Endothelial cell of umbilical vein (primary cell): ENCODE measurements at regions of chr2 and their contacts with region 1.

Region 1: GRCh38 chr2:99818842-99819241 is 323.5 kb downstream of the AFF3 start:
- DNase-seq: peak; percentile 57
- H3K4me3 ChIP-seq: no peak overlapping the region
- H3K27ac ChIP-seq: no peak overlapping the region
- H3K4me1 ChIP-seq: peaks cover 3% of the 10 kb centered on the region
- H3K27me3 ChIP-seq: peaks cover 8 to 10% of the 10 kb centered on the region in 2 experiments
- CTCF ChIP-seq: peak; percentile 13 to 25
- POLR2A ChIP-seq: no peak

Region 2: DNA sequence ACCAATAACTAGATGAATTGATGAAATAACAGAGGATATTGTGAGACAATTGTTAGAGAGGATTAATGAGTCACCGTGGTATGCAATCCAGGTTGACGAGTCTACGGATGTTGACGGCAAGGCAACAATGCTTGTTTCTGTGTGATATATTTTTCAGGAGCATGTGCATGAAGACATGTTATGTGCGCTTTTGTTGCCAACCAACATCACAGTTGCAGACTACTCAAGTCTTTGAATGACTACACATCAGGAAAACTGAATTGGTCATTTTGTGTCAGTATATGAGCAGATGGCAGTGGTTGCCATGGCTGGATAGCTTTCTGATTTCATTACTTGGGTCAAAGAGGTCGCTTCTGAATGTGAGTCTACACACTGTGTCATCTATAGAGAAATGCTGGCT is 786.1 kb before region 1 on chr2:
- CTCF ChIA-PET with region 1: no interaction called
- POLR2A ChIA-PET with region 1: no interaction called
- dilution Hi-C with region 1: no loop called
- intact Hi-C with region 1: no loop called
- DNase-seq: no peak
- H3K4me3 ChIP-seq: no peak overlapping the region
- H3K27ac ChIP-seq: no peak overlapping the region
- H3K4me1 ChIP-seq: no peaks in the 10 kb centered on the region
- H3K27me3 ChIP-seq: peaks cover 2% of the 10 kb centered on the region in 2 experiments
- CTCF ChIP-seq: no peak
- POLR2A ChIP-seq: no peak

Region 3: DNA sequence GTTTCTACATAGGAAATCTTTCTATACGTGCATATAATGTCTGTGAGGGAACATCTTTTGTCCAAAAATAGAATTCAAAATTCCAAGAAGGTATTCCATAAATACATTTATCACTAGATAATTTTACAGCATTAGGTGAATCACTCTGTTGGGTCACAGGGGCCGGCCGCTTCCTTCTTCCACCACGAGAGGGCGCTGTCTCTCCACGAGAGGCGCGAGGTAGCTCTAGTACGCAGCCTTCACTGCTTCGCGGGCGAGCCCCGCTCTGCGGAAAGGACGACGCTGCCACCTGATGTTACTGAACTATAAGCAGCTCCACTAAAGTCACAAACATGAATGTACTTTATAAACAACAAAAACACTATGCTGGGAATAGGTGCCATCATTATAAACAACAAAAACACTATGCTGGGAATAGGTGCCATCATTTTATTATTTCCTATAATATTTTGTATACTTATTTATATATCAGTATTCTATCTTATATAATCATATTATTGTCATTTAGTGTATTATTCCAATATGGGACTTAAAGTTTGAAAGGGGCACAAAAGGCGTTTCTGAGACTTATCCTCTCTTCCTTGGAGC is 259.7 kb before region 1 on chr2:
- CTCF ChIA-PET with region 1: interaction called, 18 read pairs
- POLR2A ChIA-PET with region 1: no interaction called
- dilution Hi-C with region 1: no loop called
- intact Hi-C with region 1: loop called (anchors 2 kb)
- DNase-seq: peak; percentile 72
- H3K4me3 ChIP-seq: no peak overlapping the region
- H3K27ac ChIP-seq: no peak overlapping the region
- H3K4me1 ChIP-seq: no peaks in the 10 kb centered on the region
- H3K27me3 ChIP-seq: peaks cover 4 to 14% of the 10 kb centered on the region in 2 experiments
- CTCF ChIP-seq: peak; percentile 91 to 96
- POLR2A ChIP-seq: no peak

Region 4: DNA sequence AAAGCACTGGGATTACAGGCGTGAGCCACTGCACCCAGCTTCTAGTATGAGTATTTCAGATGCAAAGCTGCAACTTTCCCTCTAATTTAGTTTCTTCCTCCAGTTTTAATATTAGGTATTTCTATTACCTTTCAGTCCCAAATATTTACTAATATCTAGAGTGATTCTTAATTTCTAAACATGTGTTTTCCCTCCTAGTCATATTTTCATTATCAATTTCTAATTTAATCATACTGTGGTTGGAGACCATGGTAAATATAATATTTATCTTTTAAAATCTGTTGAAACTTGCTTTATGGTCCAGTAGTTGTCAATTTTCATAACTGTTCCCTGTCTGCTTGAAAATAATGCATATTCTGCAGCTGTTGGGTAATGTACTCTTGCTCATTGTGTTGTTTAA is 83.1 kb before region 1 on chr2:
- CTCF ChIA-PET with region 1: no interaction called
- POLR2A ChIA-PET with region 1: no interaction called
- dilution Hi-C with region 1: no loop called
- intact Hi-C with region 1: no loop called
- DNase-seq: no peak
- H3K4me3 ChIP-seq: no peak overlapping the region
- H3K27ac ChIP-seq: no peak overlapping the region
- H3K4me1 ChIP-seq: no peaks in the 10 kb centered on the region
- H3K27me3 ChIP-seq: no peaks in the 10 kb centered on the region
- CTCF ChIP-seq: no peak
- POLR2A ChIP-seq: no peak

Region 5: DNA sequence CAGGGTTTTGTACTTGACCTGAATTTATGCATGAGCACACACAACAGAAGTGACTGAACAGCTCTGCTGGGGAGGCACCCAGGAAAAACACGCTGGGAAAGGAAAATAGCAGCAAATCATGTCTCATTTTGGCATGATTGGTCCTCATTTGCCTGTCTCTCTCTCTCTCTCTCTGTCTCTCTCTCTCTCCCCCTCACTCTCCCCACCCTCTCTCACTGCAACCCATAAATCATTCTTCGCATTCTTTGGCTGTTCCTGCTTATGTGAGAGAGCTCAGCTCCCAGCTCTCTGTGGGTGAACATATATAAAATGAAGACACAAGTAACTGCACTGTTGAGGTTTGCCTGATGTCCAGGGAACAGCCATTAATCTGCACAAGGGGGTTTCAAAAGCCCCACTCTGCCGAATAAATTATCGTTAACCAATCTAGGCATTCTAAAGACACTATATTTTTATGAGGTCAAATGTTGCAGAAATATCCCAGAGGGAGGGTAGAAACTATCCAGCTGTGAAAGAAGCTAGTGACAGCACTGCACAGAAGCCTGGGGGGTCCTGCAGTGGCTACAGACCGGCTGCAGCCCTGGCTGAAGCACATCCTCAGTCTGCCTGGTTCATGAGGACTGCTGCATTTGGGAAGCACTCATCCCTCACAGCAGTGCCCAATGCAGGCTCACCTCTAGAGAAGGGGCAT is 63.2 kb after region 1 on chr2:
- CTCF ChIA-PET with region 1: interaction called, 55 read pairs
- POLR2A ChIA-PET with region 1: interaction called, 3 read pairs
- dilution Hi-C with region 1: no loop called
- intact Hi-C with region 1: loop called (anchors 1 kb)
- DNase-seq: peak; percentile 71
- H3K4me3 ChIP-seq: no peak overlapping the region
- H3K27ac ChIP-seq: peak overlapping the region; percentile 52
- H3K4me1 ChIP-seq: peaks cover 55% of the 10 kb centered on the region
- H3K27me3 ChIP-seq: no peaks in the 10 kb centered on the region
- CTCF ChIP-seq: no peak
- POLR2A ChIP-seq: no peak

Region 6: GRCh38 chr2:100013892-100014677 is 195.2 kb after region 1 on chr2:
- CTCF ChIA-PET with region 1: interaction called, 21 read pairs
- POLR2A ChIA-PET with region 1: no interaction called
- dilution Hi-C with region 1: no loop called
- intact Hi-C with region 1: no loop called
- DNase-seq: peak; percentile 21
- H3K4me3 ChIP-seq: no peak overlapping the region
- H3K27ac ChIP-seq: no peak overlapping the region
- H3K4me1 ChIP-seq: peaks cover 3% of the 10 kb centered on the region
- H3K27me3 ChIP-seq: no peaks in the 10 kb centered on the region
- CTCF ChIP-seq: no peak
- POLR2A ChIP-seq: no peak

Region 7: GRCh38 chr2:100178051-100178788 is 359.4 kb after region 1 on chr2:
- CTCF ChIA-PET with region 1: interaction called, 28 read pairs
- POLR2A ChIA-PET with region 1: no interaction called
- dilution Hi-C with region 1: no loop called
- intact Hi-C with region 1: loop called (anchors 1 kb)
- DNase-seq: peak; percentile 78
- H3K4me3 ChIP-seq: no peak overlapping the region
- H3K27ac ChIP-seq: no peak overlapping the region
- H3K4me1 ChIP-seq: no peaks in the 10 kb centered on the region
- H3K27me3 ChIP-seq: peaks cover 0 to 5% of the 10 kb centered on the region in 2 experiments
- CTCF ChIP-seq: peak; percentile 62 to 68
- POLR2A ChIP-seq: no peak

Region 8: DNA sequence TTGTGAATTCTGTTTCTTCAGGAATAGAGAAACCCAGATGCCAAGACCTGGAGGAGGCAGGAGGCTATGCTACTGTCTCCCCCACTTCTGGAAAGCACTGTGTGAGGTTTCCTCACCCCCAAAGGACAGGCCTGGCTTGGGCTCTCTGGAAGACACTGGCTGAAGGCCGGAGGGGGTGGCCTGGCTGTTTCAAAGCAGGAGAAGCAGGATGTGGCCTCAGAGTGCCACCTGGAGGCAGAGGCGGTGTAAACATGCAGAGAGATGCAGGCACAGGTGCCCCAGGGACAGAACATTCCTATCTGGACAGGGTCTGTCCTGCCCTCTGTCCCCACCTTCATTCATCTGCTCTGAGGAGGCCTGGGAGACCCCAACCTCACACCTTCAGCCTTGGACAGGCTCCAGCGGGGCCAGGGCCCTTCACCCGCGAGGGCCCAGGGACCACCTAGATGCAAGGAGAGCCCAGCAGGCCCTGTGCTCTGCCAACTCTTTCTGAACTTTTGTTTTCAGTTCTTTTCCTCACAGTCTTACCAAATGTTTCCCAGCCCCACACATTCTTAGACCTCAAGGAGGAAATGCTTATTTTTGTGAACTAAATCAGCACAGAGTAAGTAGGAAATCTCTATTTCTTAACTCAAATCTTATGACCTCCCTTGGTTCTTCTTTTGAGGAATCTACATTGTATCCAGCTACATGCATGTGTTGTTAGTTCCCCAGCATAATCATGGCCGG is 424.2 kb after region 1 on chr2:
- CTCF ChIA-PET with region 1: interaction called, 109 read pairs
- POLR2A ChIA-PET with region 1: no interaction called
- dilution Hi-C with region 1: no loop called
- intact Hi-C with region 1: loop called (anchors 1 kb)
- DNase-seq: peak; percentile 47
- H3K4me3 ChIP-seq: no peak overlapping the region
- H3K27ac ChIP-seq: no peak overlapping the region
- H3K4me1 ChIP-seq: no peaks in the 10 kb centered on the region
- H3K27me3 ChIP-seq: no peaks in the 10 kb centered on the region
- CTCF ChIP-seq: peak; percentile 71 to 80
- POLR2A ChIP-seq: no peak